Activated T-helper 1 cell treated with anti-CD3 and anti-CD28 coated beads, Interleukin-12 subunit alpha, Interleukin-12 subunit beta, Interleukin-2, Interleukin-4 antibody, amounts not matched to agents 30 ng/mL and 10 ng/mL and 1 ng/mL, durations not matched to agents 14 hours and 24 hours and 36 hours (primary cell): ENCODE measurements at regions of chr7 and their contacts with region 1.

Region 1: GRCh38 chr7:141975806-141976523 is 2.4 kb upstream of the TAS2R38 start:
- DNase-seq: peak; percentile 34
- H3K4me3 Mint-ChIP-seq: peak overlapping the region; percentile 73
- H3K27ac Mint-ChIP-seq: no peak overlapping the region
- H3K4me1 Mint-ChIP-seq: peaks cover 12% of the 10 kb centered on the region
- H3K27me3 Mint-ChIP-seq: no peaks in the 10 kb centered on the region

Region 2: DNA sequence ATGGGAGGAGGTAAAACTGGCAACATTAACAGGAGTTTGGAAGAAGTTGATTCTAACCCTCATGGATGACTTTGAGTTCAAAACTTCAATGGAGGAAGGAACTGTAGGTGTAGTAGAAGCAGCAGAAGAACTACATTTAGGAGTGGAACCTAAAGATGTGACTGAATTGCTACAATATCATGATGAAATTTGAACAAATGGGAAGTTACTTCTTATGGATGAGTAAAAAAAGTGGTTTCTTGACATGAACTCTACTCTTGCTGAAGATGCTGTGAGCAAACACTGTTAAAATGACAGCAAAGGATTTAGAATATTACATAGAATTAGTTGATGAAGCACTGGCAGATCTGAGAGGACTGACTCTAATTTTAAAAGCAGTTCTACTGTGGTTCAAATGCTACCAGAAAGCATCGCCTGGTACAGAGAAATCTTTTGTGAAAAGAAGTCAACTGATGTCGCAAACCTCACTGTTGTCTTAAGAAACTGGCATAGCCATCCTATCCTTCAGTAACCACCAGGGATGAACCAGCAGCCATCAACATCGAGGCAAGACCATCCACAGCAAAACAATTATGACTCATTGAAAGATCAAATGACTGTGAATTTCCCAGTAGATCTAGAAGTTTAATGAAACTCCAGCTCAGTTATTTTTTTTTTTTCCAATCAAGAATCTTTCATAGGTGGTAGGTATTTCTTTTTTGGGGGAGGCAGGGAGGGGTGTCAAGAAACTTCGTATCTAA is 1072.1 kb before region 1 on chr7:
- intact Hi-C with region 1: no loop called
- DNase-seq: no peak
- H3K4me3 Mint-ChIP-seq: no peak overlapping the region
- H3K27ac Mint-ChIP-seq: no peak overlapping the region
- H3K4me1 Mint-ChIP-seq: peaks cover 35% of the 10 kb centered on the region
- H3K27me3 Mint-ChIP-seq: no peaks in the 10 kb centered on the region

Region 3: DNA sequence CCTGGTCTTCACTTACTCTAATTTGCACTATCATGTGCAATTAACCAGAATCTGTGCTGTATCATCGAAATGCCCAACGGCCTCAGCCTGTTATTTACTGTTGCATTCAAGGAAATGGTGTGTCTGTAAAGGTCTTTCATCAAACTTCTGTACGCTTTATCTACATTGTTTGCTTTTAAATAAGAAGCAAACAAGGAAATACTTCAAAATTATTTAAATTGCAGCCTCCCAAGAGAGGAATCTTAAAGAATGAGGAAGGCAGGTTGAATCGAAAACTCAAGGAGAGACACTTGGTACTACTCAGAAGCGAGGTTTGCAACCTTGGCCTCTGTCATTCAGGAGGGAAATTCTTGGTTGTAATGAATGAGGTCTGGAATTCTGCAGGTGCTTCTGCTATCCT is 60.4 kb after region 1 on chr7:
- intact Hi-C with region 1: no loop called
- DNase-seq: no peak
- H3K4me3 Mint-ChIP-seq: no peak overlapping the region
- H3K27ac Mint-ChIP-seq: no peak overlapping the region
- H3K4me1 Mint-ChIP-seq: no peaks in the 10 kb centered on the region
- H3K27me3 Mint-ChIP-seq: no peaks in the 10 kb centered on the region

Region 4: DNA sequence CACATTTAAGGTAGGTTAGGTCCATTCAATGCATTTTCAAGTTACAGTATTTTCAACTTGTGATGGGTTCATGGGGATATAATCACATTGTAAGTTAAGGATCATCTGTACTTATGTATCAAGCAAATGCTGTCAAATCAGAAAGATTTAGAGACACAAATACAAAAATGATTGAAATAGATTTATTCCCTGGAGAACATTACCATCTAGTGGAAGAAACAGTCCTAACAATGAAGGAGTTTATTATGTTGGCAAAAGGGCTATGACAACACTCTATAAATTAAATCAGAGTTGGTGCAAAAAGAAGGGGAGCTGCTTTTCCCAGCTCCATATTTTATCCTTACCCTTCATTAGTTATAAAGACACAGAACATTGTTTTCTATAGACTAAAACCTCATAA is 212.9 kb after region 1 on chr7:
- intact Hi-C with region 1: loop called (anchors 1 kb)
- DNase-seq: no peak
- H3K4me3 Mint-ChIP-seq: no peak overlapping the region
- H3K27ac Mint-ChIP-seq: no peak overlapping the region
- H3K4me1 Mint-ChIP-seq: peaks cover 11% of the 10 kb centered on the region
- H3K27me3 Mint-ChIP-seq: peaks cover 23% of the 10 kb centered on the region

Region 5: DNA sequence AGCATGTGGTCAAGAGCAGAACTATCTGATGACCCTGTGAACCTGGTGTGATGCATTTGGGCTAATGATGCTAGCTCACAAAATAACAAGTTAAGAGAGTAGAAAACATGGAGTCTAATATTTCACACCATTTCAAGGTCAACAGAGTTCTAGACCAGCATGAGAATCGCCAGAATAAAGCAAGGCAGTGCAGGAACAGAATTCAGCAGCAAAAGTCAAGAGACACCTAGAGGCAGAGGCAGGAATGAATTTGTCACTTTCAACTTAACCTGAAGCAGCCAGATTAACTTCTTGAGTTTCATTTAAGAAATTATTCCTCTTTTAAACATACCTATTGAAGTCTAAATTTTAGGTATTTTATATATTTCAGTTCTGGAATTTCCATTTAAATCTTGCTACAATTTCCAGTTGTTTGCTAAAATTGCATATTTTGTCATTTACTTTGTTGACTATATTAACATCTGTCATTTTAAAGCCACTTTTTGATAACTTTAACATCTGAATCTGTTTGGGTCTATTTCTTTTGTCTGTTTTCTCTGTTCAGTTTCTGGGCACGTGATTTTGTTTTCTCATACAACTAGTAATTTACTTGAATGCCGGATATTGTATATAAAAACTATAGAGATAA is 326.1 kb after region 1 on chr7:
- intact Hi-C with region 1: loop called (anchors 1 kb)
- DNase-seq: no peak
- H3K4me3 Mint-ChIP-seq: no peak overlapping the region
- H3K27ac Mint-ChIP-seq: no peak overlapping the region
- H3K4me1 Mint-ChIP-seq: peaks cover 10% of the 10 kb centered on the region
- H3K27me3 Mint-ChIP-seq: peaks cover 7% of the 10 kb centered on the region